Dorsolateral prefrontal cortex (tissue), 120 donors: ENCODE measurements at regions of chr5 and their contacts with region 1.

Region 1: GRCh38 chr5:177113566-177114424 is 19.8 kb upstream of the NSD1 start:
- DNase-seq: peak; percentile 68 to 86 (median 80)
- H3K4me3 ChIP-seq: peak overlapping the region in 6 of 59 donors; percentile 6 to 33 (median 16)
- H3K27ac ChIP-seq: peak overlapping the region in 44 of 59 donors; percentile 3 to 93 (median 59)
- H3K27me3 ChIP-seq: no peaks in the 10 kb centered on the region
- CTCF ChIP-seq: peak; percentile 93 to 99 (median 98)

Region 2: DNA sequence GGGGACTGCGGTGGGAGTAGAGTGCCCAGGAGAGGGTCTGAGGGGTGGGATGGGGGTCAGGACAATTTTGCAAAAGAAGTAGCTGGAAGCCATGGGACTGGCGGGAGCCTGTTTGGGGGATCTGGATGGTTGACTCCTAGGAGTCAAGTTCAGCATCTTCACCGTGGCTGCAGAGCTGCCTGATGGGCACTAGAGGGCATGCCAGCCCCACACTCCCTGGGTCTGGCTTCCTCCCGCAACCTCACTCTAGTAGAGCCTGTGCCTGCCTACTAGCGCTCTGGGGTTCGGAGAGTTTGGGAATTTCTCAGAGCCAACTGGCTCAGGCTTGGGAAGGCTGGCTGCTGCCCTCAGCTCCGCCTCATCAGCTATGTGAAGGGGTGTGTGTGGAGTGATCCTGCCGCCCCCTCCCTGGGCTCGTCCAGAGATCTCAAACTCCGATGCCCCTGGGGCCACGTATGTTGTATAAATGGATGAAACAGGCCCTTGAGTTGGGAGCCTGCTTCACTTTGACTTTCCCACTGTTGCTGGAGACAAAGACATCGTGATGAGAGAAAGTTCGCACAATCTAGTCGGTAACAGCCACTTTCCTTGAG is 455.7 kb before region 1 on chr5:
- intact Hi-C with region 1: loop called in 1 of 2 experiments (anchors 10 kb)
- DNase-seq: peak; percentile 56 to 87 (median 81)
- H3K4me3 ChIP-seq: no peak overlapping the region
- H3K27ac ChIP-seq: peak overlapping the region in 37 of 59 donors; percentile 7 to 92 (median 64)
- H3K27me3 ChIP-seq: no peaks in the 10 kb centered on the region
- CTCF ChIP-seq: peak; percentile 50 to 92 (median 85)

Region 3: DNA sequence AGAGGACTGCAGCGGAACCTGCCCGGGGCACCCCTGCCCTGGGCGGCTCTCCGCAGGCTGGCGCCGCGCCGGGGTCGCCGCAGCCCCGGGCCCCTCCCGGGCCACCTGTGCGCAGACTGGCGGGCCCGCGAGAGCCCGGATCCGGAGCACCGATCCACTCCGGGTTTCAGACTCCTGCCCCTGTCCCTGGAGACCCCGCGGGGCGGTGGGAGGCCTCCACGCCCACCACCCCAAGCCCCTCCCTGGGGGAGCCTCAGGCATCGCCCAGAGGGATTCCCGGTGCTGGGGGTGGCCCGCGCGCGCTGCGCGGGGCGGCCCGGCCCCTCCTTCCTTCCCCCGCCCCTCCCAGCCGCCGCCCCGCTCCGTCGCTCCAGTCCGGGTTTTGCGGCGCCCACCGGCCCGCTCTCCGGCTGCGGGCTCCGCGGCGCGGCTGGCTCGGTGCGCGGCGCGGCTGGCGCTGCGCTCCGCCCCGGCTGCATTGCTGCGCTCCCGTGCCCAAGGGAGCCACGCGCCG is 303.7 kb before region 1 on chr5 and contains the start of gene UNC5A:
- intact Hi-C with region 1: no loop called
- DNase-seq: peak in 2 of 10 donors; percentile 72 to 76
- H3K4me3 ChIP-seq: peak within 1 kb of the TSS; percentile 34 to 74 (median 57)
- H3K27ac ChIP-seq: peak within 1 kb of the TSS in 56 of 59 donors; percentile 24 to 94 (median 81)
- H3K27me3 ChIP-seq: peaks cover 0 to 42% (median 17%) of the 10 kb centered on the region in 45 donors
- CTCF ChIP-seq: no peak
- total RNA-seq, gene UNC5A: 23.7 to 116 (median 81.0) TPM

Region 4: GRCh38 chr5:177006265-177006972 is 107.4 kb before region 1 on chr5 and contains the start of gene UIMC1:
- intact Hi-C with region 1: loop called in 1 of 2 experiments (anchors 10 kb)
- DNase-seq: peak; percentile 81 to 92 (median 87)
- H3K4me3 ChIP-seq: peak within 1 kb of the TSS; percentile 43 to 98 (median 90)
- H3K27ac ChIP-seq: peak within 1 kb of the TSS; percentile 53 to 96 (median 88)
- H3K27me3 ChIP-seq: no peaks in the 10 kb centered on the region
- CTCF ChIP-seq: peak in 22 of 56 donors; percentile 8 to 44 (median 23)
- total RNA-seq, gene UIMC1: 37.0 to 83.1 (median 53.2) TPM

Region 5: GRCh38 chr5:177071666-177072385 is 42.0 kb before region 1 on chr5:
- intact Hi-C with region 1: loop called (anchors 1 to 5 kb)
- DNase-seq: peak in 5 of 10 donors; percentile 42 to 84 (median 66)
- H3K4me3 ChIP-seq: peak overlapping the region in 20 of 59 donors; percentile 2 to 47 (median 22)
- H3K27ac ChIP-seq: peak overlapping the region in 12 of 59 donors; percentile 4 to 71 (median 42)
- H3K27me3 ChIP-seq: no peaks in the 10 kb centered on the region
- CTCF ChIP-seq: peak; percentile 74 to 94 (median 88)

Region 6: DNA sequence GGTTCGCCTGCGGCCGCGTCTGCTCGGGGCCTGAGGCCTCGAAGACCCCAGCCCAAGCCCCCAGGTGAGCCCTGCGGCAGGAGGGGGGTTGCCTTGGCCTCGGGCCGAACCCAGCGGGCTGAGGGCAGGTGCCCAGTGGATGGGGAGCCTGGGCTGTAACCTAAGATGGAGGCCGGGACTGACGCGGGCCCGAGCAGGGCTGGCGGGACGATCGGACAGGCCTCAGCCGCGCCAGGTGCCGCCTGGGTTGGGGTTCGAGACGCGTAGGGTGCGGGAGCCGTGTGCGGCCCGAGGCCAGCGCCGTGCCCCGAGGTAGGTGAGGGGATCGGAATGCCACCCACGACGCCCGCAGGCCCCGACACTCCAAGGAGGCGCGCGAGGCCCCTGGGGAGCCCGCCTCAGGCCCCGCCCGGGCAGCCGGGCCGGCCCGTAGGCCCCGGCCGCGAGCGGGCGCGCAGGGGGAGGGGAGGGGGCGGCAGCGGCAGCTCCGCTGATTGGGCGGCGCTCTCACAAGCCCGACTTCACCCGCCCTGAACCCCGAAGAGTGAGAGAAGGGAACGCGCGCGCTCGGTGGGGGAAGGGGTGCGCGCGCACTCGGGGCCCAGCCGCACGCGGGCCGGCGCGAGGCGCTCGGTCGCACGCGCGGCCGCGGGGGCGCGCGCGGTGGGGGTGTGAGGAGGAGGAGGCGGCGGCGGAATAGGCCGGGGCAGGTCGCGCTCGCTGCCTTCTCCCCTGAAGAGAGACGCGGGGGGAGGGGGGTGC is 19.5 kb after region 1 on chr5 and contains the start of gene NSD1:
- intact Hi-C with region 1: loop called (anchors 2 kb)
- DNase-seq: peak; percentile 81 to 94 (median 90)
- H3K4me3 ChIP-seq: peak within 1 kb of the TSS; percentile 54 to 93 (median 83)
- H3K27ac ChIP-seq: peak within 1 kb of the TSS; percentile 89 to 100 (median 98)
- H3K27me3 ChIP-seq: no peaks in the 10 kb centered on the region
- CTCF ChIP-seq: no peak
- total RNA-seq, gene NSD1: 73.3 to 132 (median 99.2) TPM

Region 7: GRCh38 chr5:177303121-177303924 is 189.5 kb after region 1 on chr5 and contains the starts of genes PRELID1 and RAB24:
- intact Hi-C with region 1: loop called in 1 of 2 experiments (anchors 1 kb)
- DNase-seq: peak; percentile 83 to 96 (median 90)
- H3K4me3 ChIP-seq: peak within 1 kb of the TSS; percentile 77 to 100 (median 98)
- H3K27ac ChIP-seq: peak within 1 kb of the TSS in 57 of 59 donors; percentile 28 to 93 (median 79)
- H3K27me3 ChIP-seq: no peaks in the 10 kb centered on the region
- CTCF ChIP-seq: peak in 54 of 56 donors; percentile 15 to 70 (median 50)
- total RNA-seq, gene PRELID1: 46.3 to 88.8 (median 64.7) TPM
- total RNA-seq, gene RAB24: 24.3 to 74.5 (median 50.3) TPM

Region 8: GRCh38 chr5:177516604-177517568 is 403.1 kb after region 1 on chr5 and contains the start of gene DDX41:
- intact Hi-C with region 1: loop called in 1 of 2 experiments (anchors 10 kb)
- DNase-seq: peak; percentile 95 to 98 (median 97)
- H3K4me3 ChIP-seq: peak within 1 kb of the TSS; percentile 60 to 100 (median 93)
- H3K27ac ChIP-seq: peak within 1 kb of the TSS; percentile 4 to 95 (median 87)
- H3K27me3 ChIP-seq: no peaks in the 10 kb centered on the region
- CTCF ChIP-seq: peak in 40 of 56 donors; percentile 10 to 58 (median 36)
- total RNA-seq, gene DDX41: 59.7 to 128 (median 92.7) TPM